Heart right ventricle (tissue), 16 donors: ENCODE measurements at regions of chr1 and their contacts with region 1.

Region 1: GRCh38 chr1:205849619-205850355 is at the start of gene PM20D1:
- DNase-seq: peak; percentile 56 to 94
- ATAC-seq: peak; percentile 92 to 100 (median 98)
- H3K4me3 ChIP-seq: peak within 1 kb of the TSS; percentile 10 to 62 (median 50)
- H3K27ac ChIP-seq: peak within 1 kb of the TSS in 3 of 10 donors; percentile 34 to 52 (median 51)
- H3K4me1 ChIP-seq: peaks cover 0 to 9% (median 0%) of the 10 kb centered on the region in 9 donors
- H3K27me3 ChIP-seq: peaks cover 0 to 9% (median 0%) of the 10 kb centered on the region in 7 donors
- CTCF ChIP-seq: no peak
- total RNA-seq, gene PM20D1: 0.12 to 1.9 (median 0.66) TPM

Region 2: DNA sequence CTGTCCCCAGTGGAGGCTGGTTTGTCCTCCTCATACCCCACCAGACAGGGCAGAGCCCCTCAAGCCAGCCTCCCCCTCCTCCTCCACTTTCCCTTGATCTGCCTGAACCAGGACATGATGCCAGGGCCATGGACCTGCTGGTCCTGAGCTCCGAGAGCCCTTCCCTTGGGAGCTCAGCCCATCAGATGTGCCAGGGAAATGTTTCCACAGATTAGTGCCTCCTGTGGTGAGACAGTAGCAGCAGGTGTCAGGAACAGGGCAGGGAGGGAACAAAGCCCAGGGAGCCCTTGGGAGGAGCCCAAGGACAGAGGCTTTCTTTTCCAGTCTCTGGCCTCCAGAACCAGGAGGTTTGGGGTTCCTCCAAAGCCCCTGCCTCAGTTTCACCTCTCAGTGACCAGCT is 22.2 kb before region 1 on chr1:
- intact Hi-C with region 1: loop called in 1 of 10 experiments (anchors 1 kb)
- DNase-seq: no peak
- ATAC-seq: peak in 5 of 8 donors; percentile 43 to 66 (median 55)
- H3K4me3 ChIP-seq: no peak overlapping the region
- H3K27ac ChIP-seq: peak overlapping the region in 5 of 10 donors; percentile 54 to 79 (median 61)
- H3K4me1 ChIP-seq: peaks cover 3 to 35% (median 19%) of the 10 kb centered on the region in 9 donors
- H3K27me3 ChIP-seq: no peaks in the 10 kb centered on the region
- CTCF ChIP-seq: peak in 1 of 9 donors; percentile 17